ENCODE measurements at regions of chr15 and their contacts with region 1.

Region 1: GRCh38 chr15:64044300-64045108 is 1.8 kb downstream of the DAPK2 start:
- DNase-seq: peak; percentile 29 to 49 (median 44)
- H3K4me3 ChIP-seq: no peak overlapping the region
- H3K4me3 Mint-ChIP-seq: peak overlapping the region; percentile 64 to 80
- H3K27ac ChIP-seq: no peak overlapping the region
- H3K27ac Mint-ChIP-seq: peak overlapping the region; percentile 40 to 78 (median 70)
- H3K4me1 ChIP-seq: peaks cover 54 to 59% of the 10 kb centered on the region in 2 donors
- H3K4me1 Mint-ChIP-seq: peaks cover 58% of the 10 kb centered on the region
- H3K27me3 ChIP-seq: peaks cover 0 to 28% of the 10 kb centered on the region in 2 donors
- H3K27me3 Mint-ChIP-seq: peaks cover 28 to 45% (median 42%) of the 10 kb centered on the region in 3 donors
- CTCF ChIP-seq: no peak

Region 2: GRCh38 chr15:63986751-63987341 is 57.7 kb before region 1 on chr15:
- intact Hi-C with region 1: loop called in 1 of 2 experiments (anchors 5 kb)
- DNase-seq: peak; percentile 71 to 87 (median 80)
- H3K4me3 ChIP-seq: peak overlapping the region in 1 of 3 experiments; percentile 32
- H3K4me3 Mint-ChIP-seq: peak overlapping the region in 1 of 2 donors; percentile 64
- H3K27ac ChIP-seq: peak overlapping the region; percentile 82 to 88
- H3K27ac Mint-ChIP-seq: peak overlapping the region; percentile 87 to 97 (median 95)
- H3K4me1 ChIP-seq: peaks cover 62 to 78% of the 10 kb centered on the region in 2 donors
- H3K4me1 Mint-ChIP-seq: peaks cover 75% of the 10 kb centered on the region
- H3K27me3 ChIP-seq: no peaks in the 10 kb centered on the region
- H3K27me3 Mint-ChIP-seq: peaks cover 0 to 4% (median 1%) of the 10 kb centered on the region in 3 donors
- CTCF ChIP-seq: no peak

Region 3: DNA sequence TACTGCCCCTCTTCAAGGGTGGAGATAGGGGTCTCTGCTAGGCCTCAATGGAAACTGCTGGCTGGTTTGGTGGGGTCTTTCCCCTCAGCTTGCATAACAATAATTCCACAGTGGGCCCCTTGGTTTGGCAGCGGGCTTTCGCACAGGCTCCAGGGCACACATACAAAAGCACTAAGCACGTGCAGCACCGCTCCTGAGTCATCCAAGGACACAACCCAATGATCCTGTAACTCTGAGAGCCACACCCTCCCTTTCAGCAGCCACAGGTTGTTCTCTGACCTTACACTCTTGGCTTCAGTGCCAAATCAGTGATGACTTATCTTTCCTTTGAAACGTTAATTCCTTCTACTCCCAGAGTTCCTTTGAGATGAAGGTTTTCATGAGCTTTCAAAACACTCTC is 39.9 kb before region 1 on chr15:
- intact Hi-C with region 1: loop called in 1 of 2 experiments (anchors 5 kb)
- DNase-seq: no peak
- H3K4me3 ChIP-seq: no peak overlapping the region
- H3K4me3 Mint-ChIP-seq: no peak overlapping the region
- H3K27ac ChIP-seq: no peak overlapping the region
- H3K27ac Mint-ChIP-seq: peak overlapping the region in 1 of 7 donors; percentile 40
- H3K4me1 ChIP-seq: peaks cover 37 to 43% of the 10 kb centered on the region in 2 donors
- H3K4me1 Mint-ChIP-seq: peaks cover 47% of the 10 kb centered on the region
- H3K27me3 ChIP-seq: no peaks in the 10 kb centered on the region
- H3K27me3 Mint-ChIP-seq: peaks cover 1 to 4% (median 3%) of the 10 kb centered on the region in 3 donors
- CTCF ChIP-seq: no peak